Activated CD4-positive, alpha-beta T cell treated with anti-CD3 and anti-CD28 coated beads for 36 hours (primary cell): ENCODE measurements at regions of chr9 and their contacts with region 1.

Region 1: DNA sequence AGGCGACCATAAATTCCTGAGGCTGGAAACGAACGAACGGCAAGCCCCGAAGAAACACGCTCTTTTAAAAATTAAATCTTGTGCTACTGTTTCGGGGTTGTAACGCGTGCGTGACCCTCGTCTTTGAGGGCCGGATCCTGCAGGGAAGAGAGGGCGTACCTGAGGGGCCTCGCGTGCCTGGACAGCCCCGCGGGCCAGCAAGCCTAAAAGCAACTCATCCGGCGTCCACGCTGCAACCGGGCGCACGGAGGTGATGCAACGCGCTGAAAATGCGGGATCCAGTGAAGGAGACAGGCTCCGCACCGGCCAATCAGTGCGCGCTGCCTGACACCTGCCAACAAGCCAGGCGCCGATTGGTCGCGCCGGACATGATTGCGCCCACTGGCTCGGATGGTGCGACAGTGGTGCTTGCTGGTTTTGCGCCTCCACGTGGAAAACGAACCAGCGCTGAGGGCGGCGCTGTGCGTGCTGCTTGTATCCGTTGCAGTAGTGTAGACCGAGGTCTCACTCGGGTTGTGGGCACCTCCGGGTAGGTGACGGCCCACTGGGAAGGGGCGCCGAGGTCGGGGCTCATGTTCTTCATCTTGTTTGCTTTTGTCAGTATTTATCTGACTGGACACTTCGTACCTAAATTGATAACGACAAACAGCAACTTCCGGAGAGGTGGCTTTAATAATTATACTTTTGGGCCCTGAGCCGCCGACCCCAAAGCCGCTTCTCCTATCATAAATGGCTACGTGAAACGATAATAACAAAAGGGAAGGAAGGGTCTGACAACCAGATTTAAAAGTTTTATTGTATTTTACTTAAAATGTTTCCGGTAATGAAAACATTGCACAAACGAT is at the start of gene IARS1:
- DNase-seq: peak; percentile 99
- ATAC-seq: peak; percentile 95
- H3K4me3 Mint-ChIP-seq: peak within 1 kb of the TSS; percentile 87
- H3K27ac Mint-ChIP-seq: peak within 1 kb of the TSS; percentile 98
- H3K4me1 Mint-ChIP-seq: peaks cover 56% of the 10 kb centered on the region
- H3K27me3 Mint-ChIP-seq: no peaks in the 10 kb centered on the region
- total RNA-seq, gene IARS1: 261 to 286 TPM

Region 2: GRCh38 chr9:92115071-92115858 is 178.4 kb before region 1 on chr9 and contains the start of gene SPTLC1:
- CTCF ChIA-PET with region 1: no interaction called
- POLR2A ChIA-PET with region 1: no interaction called
- intact Hi-C with region 1: loop called in 1 of 2 experiments (anchors 1 kb)
- DNase-seq: peak; percentile 97
- ATAC-seq: peak; percentile 99
- H3K4me3 Mint-ChIP-seq: peak within 1 kb of the TSS; percentile 95
- H3K27ac Mint-ChIP-seq: peak within 1 kb of the TSS; percentile 98
- H3K4me1 Mint-ChIP-seq: peaks cover 26% of the 10 kb centered on the region
- H3K27me3 Mint-ChIP-seq: no peaks in the 10 kb centered on the region
- total RNA-seq, gene SPTLC1: 45.9 to 46.6 TPM

Region 3: GRCh38 chr9:92242260-92243136 is 51.2 kb before region 1 on chr9:
- CTCF ChIA-PET with region 1: no interaction called
- POLR2A ChIA-PET with region 1: interaction called, 6 read pairs
- intact Hi-C with region 1: loop called in 1 of 2 experiments (anchors 5 kb)
- DNase-seq: no peak
- ATAC-seq: peak; percentile 30
- H3K4me3 Mint-ChIP-seq: no peak overlapping the region
- H3K27ac Mint-ChIP-seq: no peak overlapping the region
- H3K4me1 Mint-ChIP-seq: peaks cover 6% of the 10 kb centered on the region
- H3K27me3 Mint-ChIP-seq: no peaks in the 10 kb centered on the region

Region 4: GRCh38 chr9:92325269-92325990 is 31.8 kb after region 1 on chr9 and contains the starts of genes CENPP and NOL8:
- CTCF ChIA-PET with region 1: interaction called, 6 read pairs
- POLR2A ChIA-PET with region 1: interaction called, 4 read pairs
- intact Hi-C with region 1: loop called (anchors 1 kb)
- DNase-seq: peak; percentile 90
- ATAC-seq: peak; percentile 95
- H3K4me3 Mint-ChIP-seq: peak within 1 kb of the TSS; percentile 89
- H3K27ac Mint-ChIP-seq: peak within 1 kb of the TSS; percentile 97
- H3K4me1 Mint-ChIP-seq: peaks cover 37% of the 10 kb centered on the region
- H3K27me3 Mint-ChIP-seq: no peaks in the 10 kb centered on the region
- total RNA-seq, gene CENPP: 22.8 to 32.3 TPM
- total RNA-seq, gene NOL8: 57.7 to 80.2 TPM

Region 5: GRCh38 chr9:92341578-92341977 is 47.9 kb after region 1 on chr9:
- CTCF ChIA-PET with region 1: no interaction called
- POLR2A ChIA-PET with region 1: no interaction called
- intact Hi-C with region 1: no loop called
- DNase-seq: no peak
- ATAC-seq: no peak
- H3K4me3 Mint-ChIP-seq: no peak overlapping the region
- H3K27ac Mint-ChIP-seq: no peak overlapping the region
- H3K4me1 Mint-ChIP-seq: no peaks in the 10 kb centered on the region
- H3K27me3 Mint-ChIP-seq: no peaks in the 10 kb centered on the region

Region 6: GRCh38 chr9:92669890-92670708 is 376.4 kb after region 1 on chr9 and contains the start of gene IPPK:
- CTCF ChIA-PET with region 1: no interaction called
- POLR2A ChIA-PET with region 1: no interaction called
- intact Hi-C with region 1: loop called in 1 of 2 experiments (anchors 1 kb)
- DNase-seq: peak; percentile 99
- ATAC-seq: peak; percentile 94
- H3K4me3 Mint-ChIP-seq: peak within 1 kb of the TSS; percentile 96
- H3K27ac Mint-ChIP-seq: peak within 1 kb of the TSS; percentile 93
- H3K4me1 Mint-ChIP-seq: peaks cover 33% of the 10 kb centered on the region
- H3K27me3 Mint-ChIP-seq: no peaks in the 10 kb centered on the region
- total RNA-seq, gene IPPK: 9.9 to 12.2 TPM

Region 7: GRCh38 chr9:93207326-93207814 is 913.7 kb after region 1 on chr9:
- CTCF ChIA-PET with region 1: no interaction called
- POLR2A ChIA-PET with region 1: no interaction called
- intact Hi-C with region 1: no loop called
- DNase-seq: no peak
- ATAC-seq: no peak
- H3K4me3 Mint-ChIP-seq: no peak overlapping the region
- H3K27ac Mint-ChIP-seq: no peak overlapping the region
- H3K4me1 Mint-ChIP-seq: no peaks in the 10 kb centered on the region
- H3K27me3 Mint-ChIP-seq: no peaks in the 10 kb centered on the region